ENCODE measurements at regions of chr13 and their contacts with region 1.

Region 1: GRCh38 chr13:29472332-29472961 is 123.0 kb downstream of the SLC7A1 start:
- DNase-seq: peak; percentile 74 to 78 (median 76)
- H3K4me3 ChIP-seq: no peak overlapping the region
- H3K27ac ChIP-seq: no peak overlapping the region
- H3K4me1 ChIP-seq: peaks cover 0 to 17% (median 6%) of the 10 kb centered on the region in 4 experiments
- H3K27me3 ChIP-seq: no peaks in the 10 kb centered on the region

Region 2: DNA sequence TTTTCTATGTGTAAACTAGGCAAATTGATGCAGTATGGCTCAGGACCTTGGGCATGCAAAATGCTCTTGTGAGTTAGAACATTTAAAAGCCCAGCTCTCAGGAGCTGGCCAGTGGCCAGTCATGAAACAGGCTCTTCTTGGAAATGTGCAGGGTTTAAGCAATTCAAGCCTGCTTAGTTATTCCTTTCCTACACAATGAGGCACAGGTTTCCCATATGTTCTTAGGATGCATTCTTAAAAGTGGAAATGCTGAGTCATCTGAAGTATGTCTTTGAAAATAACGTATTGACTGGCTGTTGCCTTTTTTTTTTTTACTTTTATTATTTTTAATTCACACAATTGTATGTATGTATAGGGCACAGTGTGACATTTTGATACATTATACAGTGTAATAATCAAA is 177.6 kb before region 1 on chr13:
- CTCF ChIA-PET with region 1: no interaction called
- POLR2A ChIA-PET with region 1: no interaction called
- DNase-seq: no peak
- H3K4me3 ChIP-seq: no peak overlapping the region
- H3K27ac ChIP-seq: no peak overlapping the region
- H3K4me1 ChIP-seq: no peaks in the 10 kb centered on the region
- H3K27me3 ChIP-seq: no peaks in the 10 kb centered on the region

Region 3: DNA sequence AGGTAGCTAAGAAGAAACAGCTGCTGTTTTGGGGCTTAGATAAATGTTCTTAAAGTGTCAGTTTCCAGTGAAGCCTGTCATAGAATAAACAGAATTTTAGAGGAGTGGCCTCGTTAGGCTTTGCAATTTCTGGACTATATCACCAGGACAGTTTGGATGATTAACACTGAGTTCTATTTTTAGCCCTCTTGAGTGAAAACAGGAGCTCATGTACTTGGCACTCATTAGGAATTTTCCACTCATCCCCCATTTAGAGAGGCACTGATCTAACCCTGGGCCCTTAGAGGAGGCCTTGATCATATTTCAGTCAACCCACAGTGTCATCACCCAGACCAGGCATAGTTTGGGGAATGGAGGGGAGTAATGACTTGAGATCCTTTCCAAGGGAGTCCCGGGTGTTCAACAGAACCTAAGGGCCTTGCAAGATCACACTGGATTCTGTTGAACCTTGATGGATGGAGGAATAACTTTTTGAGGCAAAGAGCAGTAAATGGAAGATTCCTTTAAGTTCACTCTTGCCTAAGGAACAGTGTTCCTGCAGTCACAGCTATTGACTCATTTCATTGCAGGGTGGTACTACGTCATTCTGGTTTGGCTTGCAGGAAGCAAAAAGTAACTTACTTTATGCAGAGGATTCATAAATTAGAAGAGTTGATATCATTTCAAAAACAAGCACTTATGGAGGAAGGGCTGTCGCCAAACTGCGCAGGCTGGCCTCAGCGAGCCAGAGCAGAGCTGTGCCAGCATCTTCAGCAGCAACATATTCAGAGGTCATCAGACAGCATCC is 37.1 kb before region 1 on chr13:
- CTCF ChIA-PET with region 1: no interaction called
- POLR2A ChIA-PET with region 1: no interaction called
- DNase-seq: no peak
- H3K4me3 ChIP-seq: no peak overlapping the region
- H3K27ac ChIP-seq: no peak overlapping the region
- H3K4me1 ChIP-seq: no peaks in the 10 kb centered on the region
- H3K27me3 ChIP-seq: peaks cover 6 to 25% (median 6%) of the 10 kb centered on the region in 5 experiments

Region 4: DNA sequence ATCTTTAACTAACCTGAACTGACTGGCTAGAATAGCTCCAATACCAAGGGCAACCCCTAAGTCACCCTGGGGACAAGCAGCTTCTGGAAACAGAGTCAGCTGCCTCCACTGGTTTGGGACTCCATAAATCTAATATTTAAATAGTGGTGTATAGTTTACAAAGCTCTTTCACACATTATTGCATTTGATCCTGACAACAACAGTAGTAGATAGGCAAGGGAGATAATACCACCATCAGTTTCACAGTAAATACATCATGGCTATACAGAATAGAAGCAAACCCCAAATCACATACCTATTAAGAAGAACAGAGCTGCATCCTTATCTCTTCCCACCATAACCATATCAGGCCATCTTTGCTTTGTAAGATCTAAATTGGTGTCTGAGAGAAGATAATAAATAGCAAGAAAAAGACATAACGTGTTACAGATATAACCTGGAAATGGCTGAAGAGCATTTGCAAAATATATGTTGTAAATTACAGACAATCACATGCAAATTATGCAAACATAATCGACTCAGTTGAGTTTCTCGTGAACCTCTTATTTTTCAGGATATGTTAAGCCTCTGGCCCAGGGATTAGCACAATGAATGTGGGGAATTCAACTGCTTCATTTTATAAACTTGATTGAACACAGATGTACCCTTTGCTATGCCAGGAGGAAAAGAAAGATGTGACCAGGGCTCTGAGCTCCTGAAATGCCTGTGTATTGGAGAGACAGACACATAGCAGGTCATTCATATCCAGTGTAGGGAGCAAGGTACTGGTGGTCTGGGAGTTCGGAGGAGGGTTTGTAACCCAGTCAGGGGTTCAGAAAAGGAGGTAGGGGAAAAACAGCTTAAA is 19.5 kb before region 1 on chr13:
- CTCF ChIA-PET with region 1: interaction called, 10 read pairs
- POLR2A ChIA-PET with region 1: no interaction called
- DNase-seq: no peak
- H3K4me3 ChIP-seq: no peak overlapping the region
- H3K27ac ChIP-seq: no peak overlapping the region
- H3K4me1 ChIP-seq: peaks cover 0 to 8% (median 4%) of the 10 kb centered on the region in 4 experiments
- H3K27me3 ChIP-seq: no peaks in the 10 kb centered on the region

Region 5: DNA sequence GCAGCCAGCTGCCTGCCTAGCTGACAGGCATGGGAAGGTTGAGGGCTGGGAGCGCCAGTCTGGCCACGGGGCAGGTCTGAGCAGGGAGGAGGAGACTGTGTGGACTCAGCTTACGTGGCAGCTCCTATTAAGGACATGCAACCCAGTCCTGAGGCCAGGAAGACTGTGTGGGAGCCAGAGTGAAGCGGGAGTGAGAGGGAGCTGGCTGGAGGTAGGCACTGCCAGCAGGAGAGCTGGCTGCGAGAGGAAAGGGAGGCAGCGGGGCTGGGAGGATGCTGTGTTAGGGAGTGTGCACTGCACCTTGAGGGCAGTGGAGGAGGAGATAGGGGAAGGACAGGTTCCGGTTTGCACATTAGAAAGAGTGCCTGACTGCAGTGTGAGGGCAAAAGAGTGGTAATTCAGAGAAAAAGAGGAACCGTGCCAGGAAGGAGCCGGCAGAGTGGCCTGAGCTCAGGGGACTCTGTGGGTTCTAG is 23.8 kb after region 1 on chr13:
- CTCF ChIA-PET with region 1: interaction called, 20 read pairs
- POLR2A ChIA-PET with region 1: no interaction called
- DNase-seq: peak; percentile 43 to 84 (median 80)
- H3K4me3 ChIP-seq: peak overlapping the region in 4 of 7 experiments; percentile 21 to 63 (median 33)
- H3K27ac ChIP-seq: no peak overlapping the region
- H3K4me1 ChIP-seq: peaks cover 2 to 23% (median 16%) of the 10 kb centered on the region in 4 experiments
- H3K27me3 ChIP-seq: no peaks in the 10 kb centered on the region

Measured in common myeloid progenitor, CD34-positive (primary cell).